Activated T-helper 2 cell treated with anti-CD3 and anti-CD28 coated beads, Interferon-gamma antibody, Interleukin-2, Interleukin-4, amounts not matched to agents 10 μg/mL and 5 μg/mL and 100 μg/mL, durations not matched to agents 14 hours and 24 hours and 36 hours (primary cell): ENCODE measurements at regions of chr5 and their contacts with region 1.

Region 1: GRCh38 chr5:169583424-169584204 is at the start of gene SPDL1:
- DNase-seq: peak; percentile 93
- H3K4me3 Mint-ChIP-seq: peak within 1 kb of the TSS; percentile 98
- H3K27ac Mint-ChIP-seq: peak within 1 kb of the TSS; percentile 94
- H3K4me1 Mint-ChIP-seq: peaks cover 42% of the 10 kb centered on the region
- H3K27me3 Mint-ChIP-seq: peaks cover 12% of the 10 kb centered on the region
- total RNA-seq, gene SPDL1: 35.1 and 35.2 TPM in 2 replicates

Region 2: GRCh38 chr5:168579488-168580226 is 1004.0 kb before region 1 on chr5:
- intact Hi-C with region 1: loop called (anchors 1 kb)
- DNase-seq: peak; percentile 97
- H3K4me3 Mint-ChIP-seq: peak overlapping the region; percentile 77
- H3K27ac Mint-ChIP-seq: peak overlapping the region; percentile 94
- H3K4me1 Mint-ChIP-seq: peaks cover 32% of the 10 kb centered on the region
- H3K27me3 Mint-ChIP-seq: no peaks in the 10 kb centered on the region

Region 3: GRCh38 chr5:168706655-168707069 is 877.0 kb before region 1 on chr5:
- intact Hi-C with region 1: loop called (anchors 1 kb)
- DNase-seq: peak; percentile 16
- H3K4me3 Mint-ChIP-seq: no peak overlapping the region
- H3K27ac Mint-ChIP-seq: no peak overlapping the region
- H3K4me1 Mint-ChIP-seq: no peaks in the 10 kb centered on the region
- H3K27me3 Mint-ChIP-seq: no peaks in the 10 kb centered on the region

Region 4: DNA sequence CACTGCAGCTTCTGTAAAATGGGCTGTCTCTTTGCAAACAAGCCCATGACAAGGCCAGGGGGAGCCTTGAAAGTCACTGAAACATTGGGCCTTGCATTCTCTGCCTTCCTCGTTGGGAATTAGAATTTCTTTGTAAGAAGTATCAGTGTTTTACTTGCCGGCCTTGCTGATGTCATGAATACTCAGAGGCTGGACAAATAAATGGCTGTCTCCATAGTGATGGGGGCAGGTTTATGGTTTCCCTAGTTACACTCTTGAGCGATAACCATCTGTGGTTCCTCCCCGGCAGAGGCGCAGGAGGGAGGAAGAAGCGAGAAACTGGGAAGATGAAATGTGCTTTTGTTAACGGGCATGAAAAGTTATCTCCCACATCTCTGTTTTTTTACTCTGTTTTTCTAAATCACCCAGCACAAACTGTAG is 731.7 kb before region 1 on chr5:
- intact Hi-C with region 1: loop called (anchors 5 kb)
- DNase-seq: peak; percentile 65
- H3K4me3 Mint-ChIP-seq: peak overlapping the region; percentile 68
- H3K27ac Mint-ChIP-seq: peak overlapping the region; percentile 93
- H3K4me1 Mint-ChIP-seq: peaks cover 54% of the 10 kb centered on the region
- H3K27me3 Mint-ChIP-seq: no peaks in the 10 kb centered on the region

Region 5: GRCh38 chr5:168987543-168988300 is 595.9 kb before region 1 on chr5:
- intact Hi-C with region 1: loop called (anchors 2 kb)
- DNase-seq: peak; percentile 24
- H3K4me3 Mint-ChIP-seq: no peak overlapping the region
- H3K27ac Mint-ChIP-seq: no peak overlapping the region
- H3K4me1 Mint-ChIP-seq: peaks cover 3% of the 10 kb centered on the region
- H3K27me3 Mint-ChIP-seq: peaks cover 6% of the 10 kb centered on the region

Region 6: GRCh38 chr5:169650701-169651331 is 67.2 kb after region 1 on chr5:
- intact Hi-C with region 1: loop called (anchors 2 kb)
- DNase-seq: no peak
- H3K4me3 Mint-ChIP-seq: peak overlapping the region; percentile 67
- H3K27ac Mint-ChIP-seq: peak overlapping the region; percentile 95
- H3K4me1 Mint-ChIP-seq: peaks cover 95% of the 10 kb centered on the region
- H3K27me3 Mint-ChIP-seq: no peaks in the 10 kb centered on the region

Region 7: GRCh38 chr5:169805527-169805934 is 221.9 kb after region 1 on chr5:
- intact Hi-C with region 1: loop called (anchors 2 kb)
- DNase-seq: peak; percentile 41
- H3K4me3 Mint-ChIP-seq: peak overlapping the region; percentile 37
- H3K27ac Mint-ChIP-seq: peak overlapping the region; percentile 88
- H3K4me1 Mint-ChIP-seq: peaks cover 48% of the 10 kb centered on the region
- H3K27me3 Mint-ChIP-seq: no peaks in the 10 kb centered on the region